ENCODE measurements at regions of chr7 and their contacts with region 1.

Region 1: DNA sequence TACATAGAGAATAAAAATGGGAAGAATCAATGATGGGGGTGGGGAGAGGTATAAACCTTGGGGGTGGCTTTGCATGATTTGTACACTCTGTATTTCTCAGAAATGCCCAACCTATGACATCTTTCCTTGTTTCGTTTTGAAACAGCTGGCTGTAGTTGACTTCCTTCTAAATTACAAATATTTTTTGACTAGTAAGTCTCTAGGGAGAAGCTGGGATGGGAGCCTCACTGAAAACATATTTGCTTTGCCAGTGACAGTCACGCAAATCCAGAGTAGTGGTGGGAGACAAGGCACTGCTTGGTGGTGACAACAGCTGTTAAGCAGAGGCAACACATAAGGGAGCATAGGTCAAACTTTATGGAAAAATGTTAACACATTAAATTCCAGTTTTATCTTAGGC is 440.5 kb downstream of the SEMA3D start:
- DNase-seq: no peak
- ATAC-seq: peak in 4 of 8 donors; percentile 35 to 51 (median 44)
- H3K4me3 ChIP-seq: no peak overlapping the region
- H3K27ac ChIP-seq: no peak overlapping the region
- H3K4me1 ChIP-seq: no peaks in the 10 kb centered on the region
- H3K27me3 ChIP-seq: no peaks in the 10 kb centered on the region
- CTCF ChIP-seq: no peak

Region 2: GRCh38 chr7:83957333-83957732 is 789.0 kb before region 1 on chr7:
- intact Hi-C with region 1: no loop called
- DNase-seq: no peak
- ATAC-seq: no peak
- H3K4me3 ChIP-seq: no peak overlapping the region
- H3K27ac ChIP-seq: no peak overlapping the region
- H3K4me1 ChIP-seq: no peaks in the 10 kb centered on the region
- H3K27me3 ChIP-seq: no peaks in the 10 kb centered on the region
- CTCF ChIP-seq: no peak

Region 3: DNA sequence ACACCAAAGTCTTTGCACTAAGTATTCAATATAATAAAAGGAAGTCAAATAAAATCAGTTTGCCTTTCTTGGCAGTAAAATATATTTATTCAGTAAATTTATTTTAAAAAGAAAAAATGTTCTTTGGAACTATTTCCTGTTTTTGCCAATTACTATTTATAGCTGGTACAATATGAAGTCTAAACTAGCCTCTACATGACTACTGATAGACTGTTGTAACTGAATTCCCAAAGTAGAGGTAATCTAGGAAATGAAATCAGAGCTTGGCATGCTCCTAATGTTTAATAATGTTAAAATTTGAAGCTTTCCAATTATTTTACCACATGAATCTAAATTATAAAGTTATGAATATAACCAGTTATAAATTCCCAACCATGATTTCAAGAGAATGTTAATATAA is 55.0 kb after region 1 on chr7:
- intact Hi-C with region 1: loop called in 1 of 10 experiments (anchors 10 kb)
- DNase-seq: no peak
- ATAC-seq: peak in 1 of 8 donors; percentile 49
- H3K4me3 ChIP-seq: no peak overlapping the region
- H3K27ac ChIP-seq: no peak overlapping the region
- H3K4me1 ChIP-seq: peaks cover 0 to 18% (median 5%) of the 10 kb centered on the region in 9 donors
- H3K27me3 ChIP-seq: no peaks in the 10 kb centered on the region
- CTCF ChIP-seq: no peak

Measured in heart right ventricle (tissue), 16 donors.